AG04449 (cell line): ENCODE measurements at regions of chr9 and their contacts with region 1.

Region 1: GRCh38 chr9:101458955-101459631 is 23.5 kb upstream of the ALDOB start:
- DNase-seq: no peak
- H3K4me3 ChIP-seq: no peak overlapping the region
- CTCF ChIP-seq: peak; percentile 86

Region 2: GRCh38 chr9:101472891-101473290 is 13.8 kb after region 1 on chr9:
- CTCF ChIA-PET with region 1: interaction called, 38 read pairs
- POLR2A ChIA-PET with region 1: no interaction called
- DNase-seq: no peak
- H3K4me3 ChIP-seq: no peak overlapping the region
- CTCF ChIP-seq: no peak

Region 3: DNA sequence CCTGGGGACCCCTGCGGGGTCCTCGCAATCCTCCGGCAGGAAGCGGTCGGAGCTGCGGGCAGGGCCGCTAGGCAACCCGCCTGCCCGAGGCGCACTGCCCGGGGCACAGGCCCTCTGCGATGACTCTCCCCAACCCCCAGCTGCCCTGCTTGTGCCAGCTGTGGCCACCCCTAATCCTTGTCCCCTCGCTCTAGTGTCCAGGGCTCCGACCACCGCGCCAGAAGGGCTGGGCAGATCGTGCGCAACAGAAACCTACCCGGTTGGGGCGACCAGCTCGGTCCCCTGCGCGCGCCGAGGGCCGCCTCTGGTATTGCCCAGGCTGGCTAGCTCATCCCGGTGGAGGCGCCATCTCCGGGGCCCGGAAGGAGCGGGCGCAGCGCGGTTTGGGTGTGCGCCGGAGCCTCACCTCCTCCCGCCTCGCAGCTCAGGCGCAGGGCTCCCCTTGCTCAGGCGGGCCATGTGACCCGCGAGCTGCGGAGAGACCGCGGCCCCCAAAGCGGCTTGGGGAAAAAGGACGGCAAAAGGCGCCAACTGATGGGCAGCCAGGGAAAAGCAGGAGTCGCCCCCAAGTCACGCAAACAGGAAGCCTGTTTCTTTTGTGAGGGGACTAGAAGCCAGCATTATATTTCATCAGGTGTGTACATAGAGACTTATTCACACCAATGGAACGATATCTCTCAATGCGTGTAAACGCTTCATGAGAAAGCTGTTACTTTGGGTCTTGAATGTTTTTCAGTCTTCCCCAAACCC is 27.8 kb after region 1 on chr9:
- CTCF ChIA-PET with region 1: interaction called, 17 read pairs
- POLR2A ChIA-PET with region 1: no interaction called
- DNase-seq: no peak
- H3K4me3 ChIP-seq: peak overlapping the region; percentile 71
- CTCF ChIP-seq: peak; percentile 38

Region 4: DNA sequence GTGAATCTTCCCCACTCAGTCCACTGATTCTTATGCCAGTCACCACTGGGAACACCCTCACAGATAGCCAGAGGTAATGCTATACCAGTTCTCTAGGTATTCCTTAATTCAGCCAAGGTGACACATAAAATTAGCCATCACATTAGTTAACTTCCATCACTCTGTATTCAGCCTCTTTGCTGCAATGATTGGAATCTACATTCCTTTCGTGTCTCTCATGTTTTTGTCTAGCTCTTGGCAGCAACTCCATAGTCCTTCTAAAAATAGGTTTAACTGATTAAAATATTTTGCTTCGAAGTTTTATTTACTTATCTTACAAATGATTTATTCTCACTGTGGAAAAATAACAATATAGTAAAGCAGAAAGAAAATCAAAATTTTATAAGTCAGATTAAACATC is 55.0 kb after region 1 on chr9:
- CTCF ChIA-PET with region 1: interaction called, 975 read pairs
- POLR2A ChIA-PET with region 1: no interaction called
- DNase-seq: no peak
- H3K4me3 ChIP-seq: no peak overlapping the region
- CTCF ChIP-seq: no peak

Region 5: DNA sequence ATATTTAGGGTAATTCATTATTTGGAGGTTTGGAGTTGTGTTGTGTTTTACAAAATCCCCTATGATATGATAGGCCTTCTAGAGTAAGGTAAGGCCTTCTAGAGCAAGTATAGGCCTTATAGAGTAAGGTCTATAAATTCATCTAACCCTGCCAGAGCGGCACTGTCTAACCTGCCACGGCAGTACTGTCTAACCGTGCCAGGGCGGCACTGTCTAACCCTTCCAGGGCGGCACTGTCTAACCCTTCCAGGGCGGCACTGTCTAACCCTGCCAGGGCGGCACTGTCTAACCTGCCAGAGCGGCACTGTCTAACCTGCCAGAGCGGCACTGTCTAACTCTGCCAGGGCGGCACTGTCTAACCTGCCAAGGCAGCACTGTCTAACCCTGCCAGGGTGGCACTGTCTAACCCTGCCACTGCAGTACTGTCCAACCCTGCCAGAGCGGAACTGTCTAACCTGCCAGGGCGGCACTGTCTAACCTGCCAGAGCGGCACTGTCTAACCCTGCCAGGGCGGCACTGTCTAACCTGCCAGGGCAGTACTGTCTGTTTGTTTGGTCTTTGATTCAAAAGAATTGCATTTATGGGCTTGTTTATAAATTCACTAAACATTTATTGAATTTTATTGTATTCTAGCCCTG is 84.1 kb after region 1 on chr9:
- CTCF ChIA-PET with region 1: interaction called, 975 read pairs
- POLR2A ChIA-PET with region 1: no interaction called
- DNase-seq: no peak
- H3K4me3 ChIP-seq: no peak overlapping the region
- CTCF ChIP-seq: no peak

Region 6: GRCh38 chr9:101566904-101567724 is 108.0 kb after region 1 on chr9:
- CTCF ChIA-PET with region 1: interaction called, 112 read pairs
- POLR2A ChIA-PET with region 1: no interaction called
- DNase-seq: no peak
- H3K4me3 ChIP-seq: no peak overlapping the region
- CTCF ChIP-seq: peak; percentile 50